ENCODE measurements at regions of chr7 and their contacts with region 1.

Region 1: GRCh38 chr7:138738551-138739335 is 37.6 kb upstream of the SVOPL start:
- DNase-seq: peak; percentile 74 to 78
- ATAC-seq: peak in 7 of 8 donors; percentile 43 to 88 (median 84)
- H3K4me3 ChIP-seq: no peak overlapping the region
- H3K27ac ChIP-seq: no peak overlapping the region
- H3K4me1 ChIP-seq: no peaks in the 10 kb centered on the region
- H3K27me3 ChIP-seq: no peaks in the 10 kb centered on the region
- CTCF ChIP-seq: peak; percentile 72 to 96 (median 90)

Region 2: DNA sequence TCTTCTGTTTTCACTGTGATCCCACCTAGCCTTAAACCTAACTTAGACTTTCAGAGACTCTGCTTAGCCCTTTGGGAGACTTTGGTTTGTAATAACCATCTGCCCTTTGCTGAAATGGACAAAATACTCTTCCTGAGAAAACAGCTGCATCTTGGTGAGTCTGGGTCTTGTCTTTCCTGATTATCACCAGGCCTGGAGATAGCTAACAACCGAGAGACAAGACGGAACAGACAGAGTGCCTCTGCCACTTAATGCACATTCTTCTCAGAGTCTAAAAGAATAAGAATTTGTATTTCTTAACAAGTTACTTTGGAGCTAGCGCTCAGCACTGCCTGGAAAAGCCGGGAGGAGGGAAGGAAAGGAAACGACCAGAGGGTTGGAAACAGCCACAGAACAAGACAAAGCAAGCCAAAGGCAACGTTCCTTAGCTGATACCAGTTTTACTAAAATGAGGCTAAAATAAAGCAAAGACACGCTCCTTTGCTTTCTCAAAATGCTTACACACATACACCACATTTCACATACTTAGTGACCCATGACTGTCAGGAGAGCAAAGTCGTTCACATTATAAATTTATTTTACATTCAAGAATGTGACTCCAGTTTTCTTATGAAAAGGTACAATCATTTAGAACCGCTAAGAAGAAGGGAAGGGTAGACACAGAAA is 821.6 kb before region 1 on chr7:
- intact Hi-C with region 1: loop called in 1 of 10 experiments (anchors 10 kb)
- DNase-seq: no peak
- ATAC-seq: peak in 1 of 8 donors; percentile 25
- H3K4me3 ChIP-seq: no peak overlapping the region
- H3K27ac ChIP-seq: peak overlapping the region in 3 of 10 donors; percentile 31 to 58 (median 33)
- H3K4me1 ChIP-seq: peaks cover 0 to 28% (median 7%) of the 10 kb centered on the region in 9 donors
- H3K27me3 ChIP-seq: no peaks in the 10 kb centered on the region
- CTCF ChIP-seq: no peak

Region 3: DNA sequence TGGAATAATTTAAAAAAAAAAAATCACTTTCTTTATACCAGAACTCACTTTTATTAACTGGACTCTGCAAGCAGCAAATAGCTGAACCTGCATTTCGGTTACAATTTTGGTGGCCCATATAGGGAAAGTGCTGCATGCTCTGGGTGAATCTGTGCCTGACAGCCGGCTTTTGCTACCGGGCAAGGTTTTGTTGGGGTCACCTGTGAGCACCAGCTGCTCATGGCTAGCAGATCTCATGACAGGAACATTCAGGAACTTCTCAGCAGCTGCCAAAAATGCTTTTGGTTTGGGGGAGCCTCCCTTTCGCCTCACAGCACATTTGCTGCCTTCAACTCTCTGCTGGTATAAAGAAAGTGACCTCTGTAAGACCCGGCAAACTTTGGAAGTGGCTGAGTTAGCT is 723.6 kb before region 1 on chr7:
- intact Hi-C with region 1: loop called in 1 of 10 experiments (anchors 5 kb)
- DNase-seq: no peak
- ATAC-seq: no peak
- H3K4me3 ChIP-seq: no peak overlapping the region
- H3K27ac ChIP-seq: no peak overlapping the region
- H3K4me1 ChIP-seq: no peaks in the 10 kb centered on the region
- H3K27me3 ChIP-seq: no peaks in the 10 kb centered on the region
- CTCF ChIP-seq: no peak

Region 4: DNA sequence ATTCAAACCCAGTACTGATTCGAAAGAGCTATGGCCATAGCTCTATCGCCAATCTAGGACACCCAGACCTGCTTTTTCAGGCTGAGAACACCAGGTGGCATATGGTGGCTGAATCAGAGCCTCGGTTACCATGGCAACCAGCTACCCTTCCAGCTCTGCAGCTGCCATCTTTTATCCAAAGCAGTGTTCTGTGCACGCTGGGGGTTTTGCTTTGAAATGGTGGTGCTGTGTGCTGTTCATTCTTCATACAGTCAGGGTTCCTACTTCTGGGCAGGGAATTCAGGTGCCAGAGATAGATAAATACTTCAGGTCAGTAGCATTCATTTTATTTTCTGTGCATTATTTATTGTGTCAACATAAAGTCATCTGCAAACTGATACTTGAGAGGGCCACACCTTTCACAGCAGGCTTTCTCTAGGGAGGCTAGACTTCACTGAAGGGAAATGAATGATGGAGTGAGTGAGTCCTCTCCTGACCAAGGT is 577.1 kb before region 1 on chr7:
- intact Hi-C with region 1: loop called in 9 of 10 experiments (anchors 1 to 5 kb)
- DNase-seq: peak; percentile 23 to 87
- ATAC-seq: peak; percentile 72 to 86 (median 81)
- H3K4me3 ChIP-seq: no peak overlapping the region
- H3K27ac ChIP-seq: no peak overlapping the region
- H3K4me1 ChIP-seq: no peaks in the 10 kb centered on the region
- H3K27me3 ChIP-seq: no peaks in the 10 kb centered on the region
- CTCF ChIP-seq: peak; percentile 47 to 83 (median 73)

Region 5: DNA sequence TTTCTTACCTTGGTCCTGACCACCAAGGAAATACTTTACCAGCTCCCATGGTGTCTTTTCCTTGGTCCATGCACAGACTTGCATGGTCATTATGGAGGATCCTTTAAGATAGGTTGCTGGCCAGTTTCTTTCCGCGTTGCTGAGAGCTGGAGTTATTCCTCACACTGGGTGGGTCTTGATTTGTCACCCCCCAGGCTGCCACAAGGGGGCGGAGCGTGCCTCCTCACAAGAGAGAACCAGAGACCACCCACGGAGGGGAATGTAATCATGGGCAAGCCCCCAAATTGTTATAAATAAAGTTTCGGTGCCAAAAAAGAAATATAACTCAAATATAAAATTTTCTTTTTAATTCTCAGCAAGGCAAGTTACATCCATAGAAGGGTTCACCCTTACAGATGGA is 289.2 kb before region 1 on chr7:
- intact Hi-C with region 1: loop called in 3 of 10 experiments (anchors 10 kb)
- DNase-seq: no peak
- ATAC-seq: no peak
- H3K4me3 ChIP-seq: no peak overlapping the region
- H3K27ac ChIP-seq: no peak overlapping the region
- H3K4me1 ChIP-seq: no peaks in the 10 kb centered on the region
- H3K27me3 ChIP-seq: no peaks in the 10 kb centered on the region
- CTCF ChIP-seq: peak in 6 of 9 donors; percentile 9 to 30 (median 24)

Region 6: DNA sequence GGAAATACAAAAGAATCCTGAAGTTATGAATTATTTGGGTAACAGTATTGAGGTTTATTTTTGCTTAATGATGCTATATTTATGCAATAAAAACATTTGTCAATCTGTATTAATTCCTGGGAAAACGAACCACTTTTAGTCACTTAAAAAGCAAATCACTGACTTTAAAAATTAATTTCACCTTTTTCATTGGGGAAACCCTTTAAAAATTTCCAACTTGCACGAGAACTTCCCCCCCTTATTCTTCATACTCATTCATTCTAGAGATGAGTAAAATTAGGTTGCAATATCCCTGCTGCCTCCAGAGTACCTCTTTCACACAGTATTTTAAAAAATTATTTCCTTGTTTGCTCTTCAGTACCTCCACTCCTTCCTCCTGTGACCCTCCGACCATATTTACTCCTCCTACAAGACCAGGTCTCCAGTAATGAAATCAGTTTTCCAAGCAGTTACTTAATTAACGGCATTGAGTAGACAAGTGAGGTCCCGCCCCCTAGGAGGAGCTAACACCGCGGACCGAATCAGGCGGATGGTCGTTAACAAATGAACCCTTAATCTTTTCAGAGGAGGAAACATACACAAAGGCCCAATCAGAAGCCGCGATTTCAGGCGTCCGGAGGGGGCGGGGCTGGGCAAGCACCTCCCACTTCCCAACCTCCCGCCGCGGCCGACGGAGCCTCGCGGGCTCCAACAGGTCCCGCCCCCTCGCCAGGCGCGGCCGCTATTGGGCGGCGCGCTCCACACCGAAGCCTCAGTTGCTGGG is 279.1 kb before region 1 on chr7:
- intact Hi-C with region 1: loop called in 3 of 10 experiments (anchors 5 to 10 kb)
- DNase-seq: peak in 1 of 2 donors; percentile 97
- ATAC-seq: peak; percentile 97 to 99 (median 98)
- H3K4me3 ChIP-seq: peak overlapping the region in 7 of 10 donors; percentile 79 to 96 (median 87)
- H3K27ac ChIP-seq: peak overlapping the region in 5 of 10 donors; percentile 48 to 99 (median 98)
- H3K4me1 ChIP-seq: peaks cover 0 to 21% (median 10%) of the 10 kb centered on the region in 9 donors
- H3K27me3 ChIP-seq: no peaks in the 10 kb centered on the region
- CTCF ChIP-seq: peak in 7 of 9 donors; percentile 12 to 46 (median 20)